ENCODE measurements at regions of chr11 and their contacts with region 1.

Region 1: GRCh38 chr11:123062158-123062891 is 389 bp upstream of the HSPA8 start:
- DNase-seq: peak; percentile 98 to 100 (median 100)
- ATAC-seq: peak; percentile 83 to 88
- H3K4me3 Mint-ChIP-seq: peak overlapping the region; percentile 96 to 100 (median 99)
- H3K27ac Mint-ChIP-seq: peak overlapping the region; percentile 96 to 100 (median 98)
- H3K4me1 Mint-ChIP-seq: peaks cover 42 to 73% (median 60%) of the 10 kb centered on the region in 4 donors
- H3K27me3 Mint-ChIP-seq: peaks cover 0 to 1% (median 0%) of the 10 kb centered on the region in 5 donors

Region 2: DNA sequence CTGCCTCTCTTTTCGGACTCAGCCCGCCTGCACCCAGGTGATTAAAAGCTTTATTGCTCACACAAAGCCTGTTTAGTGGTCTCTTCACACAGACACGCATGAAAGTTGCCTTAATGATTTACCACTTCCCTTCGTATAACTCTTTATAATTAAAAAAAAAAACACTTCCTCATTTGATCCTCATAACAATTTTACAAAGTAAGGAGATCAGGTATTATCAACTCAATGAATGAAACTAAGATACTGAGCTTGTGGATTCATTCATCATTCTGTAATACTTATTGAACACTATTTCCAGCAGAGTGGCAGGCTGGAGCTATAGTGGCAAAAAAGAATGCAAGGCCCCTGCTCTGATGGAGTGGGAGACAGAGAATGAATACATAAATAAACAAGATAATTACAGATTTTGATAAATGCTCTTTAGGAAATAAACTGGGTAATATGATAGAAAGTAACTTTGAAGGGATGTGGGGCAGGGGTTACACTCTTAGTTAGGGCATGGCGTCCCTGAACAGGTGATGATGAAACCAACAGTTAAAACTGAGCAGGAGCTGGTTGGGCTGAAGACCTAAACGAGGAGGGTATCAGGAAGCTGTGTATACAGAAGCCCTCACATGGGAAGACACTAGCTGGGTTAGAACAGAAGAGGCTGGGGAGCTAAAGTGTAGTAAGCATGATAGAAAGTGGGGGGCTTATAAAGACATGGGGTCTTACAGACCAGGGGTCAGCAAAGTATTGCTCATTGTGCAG is 229.4 kb before region 1 on chr11:
- POLR2A ChIA-PET with region 1: interaction called, 39 read pairs
- DNase-seq: peak in 1 of 10 donors; percentile 28
- ATAC-seq: peak; percentile 60 to 71
- H3K4me3 Mint-ChIP-seq: peak overlapping the region in 9 of 10 donors; percentile 3 to 72 (median 36)
- H3K27ac Mint-ChIP-seq: peak overlapping the region; percentile 37 to 95 (median 82)
- H3K4me1 Mint-ChIP-seq: peaks cover 25 to 56% (median 40%) of the 10 kb centered on the region in 4 donors
- H3K27me3 Mint-ChIP-seq: no peaks in the 10 kb centered on the region

Region 3: DNA sequence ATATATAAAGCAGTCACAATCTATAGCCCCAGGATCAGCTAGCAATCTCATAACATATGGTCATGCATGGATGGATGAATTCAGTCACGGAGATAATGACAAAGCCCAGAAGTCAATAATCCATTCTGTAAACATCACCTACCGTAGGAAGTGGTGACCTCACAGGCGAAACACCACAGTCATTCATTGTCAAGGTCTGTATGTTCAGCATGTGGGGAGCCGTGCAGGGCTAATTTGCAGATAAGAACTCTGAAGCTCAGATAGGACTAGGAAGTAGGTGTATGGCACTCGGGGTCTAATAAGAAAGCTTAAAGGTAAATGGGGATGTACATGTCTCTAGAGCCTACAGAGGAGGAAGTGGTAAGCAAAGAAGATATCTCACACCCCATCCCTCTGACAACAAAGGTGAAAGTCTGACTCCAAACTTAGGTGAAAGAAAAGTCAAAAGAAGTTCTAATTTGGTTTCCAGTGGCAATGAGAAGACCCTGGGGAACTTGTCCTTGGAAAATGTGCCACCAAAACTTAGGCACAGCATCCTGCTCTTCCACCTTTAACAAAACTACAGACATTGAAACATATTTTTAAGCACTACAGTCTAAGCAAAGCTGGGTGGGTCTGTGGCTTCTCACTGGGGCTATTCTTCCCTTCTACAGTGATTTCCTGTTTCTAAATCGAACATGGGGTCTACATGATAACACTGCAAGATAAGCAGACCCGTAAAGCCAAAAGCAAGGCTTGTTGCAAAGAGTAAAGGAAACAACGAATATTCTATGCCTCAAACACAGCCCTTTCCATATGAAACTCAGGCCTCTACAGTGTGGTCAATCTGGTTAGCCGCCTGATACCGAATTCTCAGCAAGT is 218.8 kb before region 1 on chr11:
- POLR2A ChIA-PET with region 1: interaction called, 39 read pairs
- DNase-seq: peak in 8 of 10 donors; percentile 46 to 79 (median 70)
- ATAC-seq: peak; percentile 81 to 89
- H3K4me3 Mint-ChIP-seq: peak overlapping the region; percentile 73 to 86 (median 81)
- H3K27ac Mint-ChIP-seq: peak overlapping the region; percentile 92 to 99 (median 96)
- H3K4me1 Mint-ChIP-seq: peaks cover 44 to 81% (median 76%) of the 10 kb centered on the region in 4 donors
- H3K27me3 Mint-ChIP-seq: no peaks in the 10 kb centered on the region

Region 4: GRCh38 chr11:123083623-123084029 is 21.3 kb after region 1 on chr11:
- POLR2A ChIA-PET with region 1: interaction called, 220 read pairs
- DNase-seq: peak in 1 of 10 donors; percentile 58
- ATAC-seq: no peak
- H3K4me3 Mint-ChIP-seq: peak overlapping the region in 2 of 10 donors; percentile 11 to 39
- H3K27ac Mint-ChIP-seq: peak overlapping the region in 7 of 10 donors; percentile 6 to 80 (median 66)
- H3K4me1 Mint-ChIP-seq: peaks cover 4 to 49% (median 33%) of the 10 kb centered on the region in 4 donors
- H3K27me3 Mint-ChIP-seq: no peaks in the 10 kb centered on the region

Region 5: DNA sequence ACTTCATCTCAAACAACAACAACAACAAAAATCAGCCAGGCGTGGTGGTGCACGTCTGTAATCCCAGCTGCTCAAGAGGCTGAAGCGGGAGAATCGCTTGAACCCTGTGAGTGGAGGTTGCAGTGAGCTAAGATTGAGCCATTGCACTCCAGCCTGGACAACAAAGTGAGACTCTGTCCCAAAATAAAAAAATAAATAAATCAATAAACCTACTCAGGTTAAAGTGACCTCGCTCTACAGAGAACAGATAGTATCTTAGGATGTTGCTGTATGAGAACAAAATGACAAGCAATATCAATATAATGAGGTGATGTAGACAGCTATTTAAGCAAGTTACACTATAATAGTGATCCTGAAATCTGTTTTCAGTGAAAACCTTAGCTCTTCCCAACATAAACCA is 34.0 kb after region 1 on chr11:
- POLR2A ChIA-PET with region 1: interaction called, 92 read pairs
- DNase-seq: no peak
- ATAC-seq: no peak
- H3K4me3 Mint-ChIP-seq: no peak overlapping the region
- H3K27ac Mint-ChIP-seq: no peak overlapping the region
- H3K4me1 Mint-ChIP-seq: peaks cover 9 to 18% (median 13%) of the 10 kb centered on the region in 4 donors
- H3K27me3 Mint-ChIP-seq: no peaks in the 10 kb centered on the region

Region 6: DNA sequence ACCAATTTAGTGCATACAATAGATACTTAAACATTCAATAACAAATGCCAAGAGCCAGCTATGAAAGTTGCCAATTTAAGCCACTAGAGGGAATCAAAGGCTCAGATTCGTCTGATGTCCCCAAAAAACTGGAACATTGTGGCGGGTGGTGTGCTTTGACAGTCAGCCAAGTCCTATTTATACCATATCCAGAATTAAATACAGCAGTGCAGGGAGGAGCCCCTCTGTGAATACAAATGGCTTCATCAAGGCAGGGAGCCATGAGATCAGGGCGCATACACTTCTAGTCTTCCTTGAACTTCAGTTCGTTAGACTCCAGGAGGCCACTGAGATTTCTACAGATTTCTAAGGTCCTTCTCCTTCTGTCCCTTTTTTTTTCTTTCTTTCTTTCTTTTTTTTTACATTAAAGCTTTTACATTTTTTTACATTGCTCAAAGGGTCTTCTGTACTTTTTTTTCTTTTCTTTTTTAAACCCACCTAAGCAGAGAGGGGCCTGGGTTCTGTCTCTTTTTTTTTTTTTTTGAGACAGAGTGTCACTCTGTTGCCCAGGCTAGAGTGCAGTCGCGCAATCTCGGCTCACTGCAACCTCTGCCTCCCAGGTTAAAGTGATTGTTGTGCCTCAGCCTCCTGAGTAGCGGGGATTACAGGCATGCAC is 41.1 kb after region 1 on chr11:
- POLR2A ChIA-PET with region 1: interaction called, 92 read pairs
- DNase-seq: peak in 8 of 10 donors; percentile 7 to 65 (median 30)
- ATAC-seq: peak; percentile 65 to 89
- H3K4me3 Mint-ChIP-seq: no peak overlapping the region
- H3K27ac Mint-ChIP-seq: peak overlapping the region in 7 of 10 donors; percentile 8 to 89 (median 49)
- H3K4me1 Mint-ChIP-seq: peaks cover 12 to 27% (median 21%) of the 10 kb centered on the region in 4 donors
- H3K27me3 Mint-ChIP-seq: no peaks in the 10 kb centered on the region

Region 7: GRCh38 chr11:123246749-123247495 is 184.6 kb after region 1 on chr11:
- POLR2A ChIA-PET with region 1: interaction called, 12 read pairs
- DNase-seq: peak; percentile 59 to 88 (median 76)
- ATAC-seq: peak; percentile 83 to 91
- H3K4me3 Mint-ChIP-seq: peak overlapping the region in 3 of 10 donors; percentile 1 to 46 (median 42)
- H3K27ac Mint-ChIP-seq: no peak overlapping the region
- H3K4me1 Mint-ChIP-seq: peaks cover 1 to 6% (median 5%) of the 10 kb centered on the region in 4 donors
- H3K27me3 Mint-ChIP-seq: peaks cover 7 to 31% (median 13%) of the 10 kb centered on the region in 5 donors

Measured in naive thymus-derived CD8-positive, alpha-beta T cell (primary cell).